ENCODE measurements at regions of chr14 and their contacts with region 1.

Region 1: GRCh38 chr14:77228056-77228455 is 43.0 kb downstream of the NGB start:
- DNase-seq: no peak
- ATAC-seq: no peak
- H3K4me3 ChIP-seq: no peak overlapping the region
- H3K27ac ChIP-seq: no peak overlapping the region
- H3K4me1 ChIP-seq: no peaks in the 10 kb centered on the region
- H3K27me3 ChIP-seq: no peaks in the 10 kb centered on the region

Region 2: DNA sequence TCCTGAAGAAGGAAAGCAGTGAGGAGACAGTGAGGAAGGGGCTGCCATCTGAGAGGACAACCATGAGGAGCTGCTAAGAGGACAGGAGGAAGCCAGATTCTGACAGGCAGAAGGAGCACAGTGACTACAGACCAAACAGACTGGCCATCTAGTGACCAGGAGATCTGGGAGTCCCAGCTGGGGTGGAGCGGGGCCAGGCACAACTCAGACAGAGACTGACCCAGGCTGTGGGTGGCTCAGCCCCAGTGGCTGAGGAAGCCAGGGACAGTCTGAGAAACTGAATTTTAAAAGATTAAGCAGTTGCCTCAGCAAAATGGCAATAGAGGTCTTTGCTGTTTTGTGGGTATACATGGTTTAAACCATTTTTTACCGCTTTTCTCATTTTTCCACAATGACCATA is 373.0 kb before region 1 on chr14:
- intact Hi-C with region 1: loop called in 1 of 4 experiments (anchors 5 kb)
- DNase-seq: peak in 1 of 3 donors; percentile 59
- ATAC-seq: peak in 1 of 2 donors; percentile 47
- H3K4me3 ChIP-seq: no peak overlapping the region
- H3K27ac ChIP-seq: no peak overlapping the region
- H3K4me1 ChIP-seq: no peaks in the 10 kb centered on the region
- H3K27me3 ChIP-seq: no peaks in the 10 kb centered on the region